ENCODE measurements at regions of chr3 and their contacts with region 1.

Region 1: DNA sequence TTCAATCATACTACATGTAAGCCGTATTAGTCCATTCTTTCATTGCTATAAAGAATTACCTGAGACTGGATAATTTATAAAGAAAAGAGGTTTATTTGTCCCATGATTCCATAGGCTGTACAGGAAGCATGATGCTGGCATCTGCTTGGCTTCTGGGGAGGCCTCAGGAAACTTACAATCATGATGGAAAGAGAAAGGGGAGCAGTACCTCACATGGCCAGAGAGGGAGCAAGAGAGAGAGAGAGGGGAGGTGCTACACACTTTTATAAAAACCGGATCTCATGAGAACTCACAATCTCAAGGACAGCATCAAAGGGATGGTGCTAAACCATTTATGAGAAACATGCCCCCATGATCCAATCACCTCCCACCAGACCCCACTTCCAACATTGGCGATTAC is 14.3 kb upstream of the CLASP2 start:
- DNase-seq: peak in 6 of 35 experiments; percentile 6 to 26 (median 11)
- ATAC-seq: no peak
- H3K4me3 ChIP-seq: no peak overlapping the region
- H3K4me3 Mint-ChIP-seq: no peak overlapping the region
- H3K27ac ChIP-seq: no peak overlapping the region
- H3K27ac Mint-ChIP-seq: no peak overlapping the region
- H3K4me1 ChIP-seq: no peaks in the 10 kb centered on the region
- H3K4me1 Mint-ChIP-seq: no peaks in the 10 kb centered on the region
- H3K27me3 ChIP-seq: no peaks in the 10 kb centered on the region
- H3K27me3 Mint-ChIP-seq: peaks cover 0 to 7% of the 10 kb centered on the region in 2 donors

Region 2: GRCh38 chr3:33131331-33132018 is 600.9 kb before region 1 on chr3:
- CTCF ChIA-PET with region 1: no interaction called
- POLR2A ChIA-PET with region 1: no interaction called
- DNase-seq: peak in 15 of 35 experiments; percentile 6 to 64 (median 18)
- ATAC-seq: peak in 3 of 4 experiments; percentile 58 to 72 (median 63)
- H3K4me3 ChIP-seq: no peak overlapping the region
- H3K4me3 Mint-ChIP-seq: no peak overlapping the region
- H3K27ac ChIP-seq: no peak overlapping the region
- H3K27ac Mint-ChIP-seq: no peak overlapping the region
- H3K4me1 ChIP-seq: peaks cover 0 to 2% of the 10 kb centered on the region in 2 experiments
- H3K4me1 Mint-ChIP-seq: peaks cover 0 to 7% (median 4%) of the 10 kb centered on the region in 3 donors
- H3K27me3 ChIP-seq: no peaks in the 10 kb centered on the region
- H3K27me3 Mint-ChIP-seq: no peaks in the 10 kb centered on the region

Region 3: GRCh38 chr3:33704891-33705290 is 27.5 kb before region 1 on chr3:
- CTCF ChIA-PET with region 1: interaction called in 1 of 2 experiments, 11 read pairs
- POLR2A ChIA-PET with region 1: no interaction called
- DNase-seq: no peak
- ATAC-seq: no peak
- H3K4me3 ChIP-seq: no peak overlapping the region
- H3K4me3 Mint-ChIP-seq: no peak overlapping the region
- H3K27ac ChIP-seq: no peak overlapping the region
- H3K27ac Mint-ChIP-seq: no peak overlapping the region
- H3K4me1 ChIP-seq: no peaks in the 10 kb centered on the region
- H3K4me1 Mint-ChIP-seq: peaks cover 39 to 53% (median 50%) of the 10 kb centered on the region in 3 donors
- H3K27me3 ChIP-seq: no peaks in the 10 kb centered on the region
- H3K27me3 Mint-ChIP-seq: no peaks in the 10 kb centered on the region